Caco-2 (cell line): ENCODE measurements at regions of chr1 and their contacts with region 1.

Region 1: DNA sequence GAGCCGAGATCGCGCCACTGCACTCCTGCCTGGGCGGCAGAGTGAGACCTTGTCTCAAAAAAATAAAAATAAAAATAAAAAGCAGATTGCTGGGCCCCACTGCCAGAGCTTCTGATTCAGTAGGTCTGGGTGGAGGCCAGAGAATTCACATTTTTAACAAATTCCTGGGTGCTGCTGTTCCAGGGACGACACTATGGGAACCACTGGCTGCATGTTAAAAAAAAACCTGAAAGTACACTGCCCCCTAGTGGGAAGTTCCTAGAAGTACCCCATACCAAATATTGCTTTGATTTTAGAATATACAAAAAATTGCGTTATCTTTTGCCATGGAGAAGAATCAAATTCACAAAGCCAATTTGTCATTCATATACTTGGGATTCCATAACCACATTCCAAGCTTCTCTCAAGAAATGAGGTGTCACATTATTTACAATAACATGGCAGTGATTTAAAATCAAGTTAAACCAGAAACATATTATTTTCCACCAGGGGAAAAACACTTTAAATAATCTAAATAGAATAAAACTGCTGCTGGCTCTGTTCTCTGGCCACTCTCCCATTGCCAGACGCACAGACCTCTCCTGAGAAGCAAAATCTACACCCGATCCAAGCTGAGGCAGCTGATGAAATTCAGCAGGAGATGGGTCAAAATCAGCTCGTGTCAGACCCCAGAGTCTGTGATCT is 27.4 kb downstream of the SYF2 start:
- DNase-seq: peak in 1 of 2 experiments; percentile 51
- H3K4me3 ChIP-seq: no peak overlapping the region
- H3K4me3 Mint-ChIP-seq: no peak overlapping the region
- H3K27ac Mint-ChIP-seq: no peak overlapping the region
- H3K4me1 ChIP-seq: no peaks in the 10 kb centered on the region
- H3K4me1 Mint-ChIP-seq: peaks cover 5% of the 10 kb centered on the region
- H3K27me3 ChIP-seq: no peaks in the 10 kb centered on the region
- H3K27me3 Mint-ChIP-seq: no peaks in the 10 kb centered on the region
- CTCF ChIP-seq: peak; percentile 34 to 47

Region 2: GRCh38 chr1:24888971-24889676 is 315.8 kb before region 1 on chr1:
- CTCF ChIA-PET with region 1: no interaction called
- POLR2A ChIA-PET with region 1: no interaction called
- intact Hi-C with region 1: no loop called
- DNase-seq: no peak
- H3K4me3 ChIP-seq: no peak overlapping the region
- H3K4me3 Mint-ChIP-seq: no peak overlapping the region
- H3K27ac Mint-ChIP-seq: no peak overlapping the region
- H3K4me1 ChIP-seq: no peaks in the 10 kb centered on the region
- H3K4me1 Mint-ChIP-seq: no peaks in the 10 kb centered on the region
- H3K27me3 ChIP-seq: no peaks in the 10 kb centered on the region
- H3K27me3 Mint-ChIP-seq: peaks cover 3% of the 10 kb centered on the region
- CTCF ChIP-seq: no peak

Region 3: GRCh38 chr1:25117233-25117823 is 87.6 kb before region 1 on chr1:
- CTCF ChIA-PET with region 1: interaction called, 6 read pairs
- POLR2A ChIA-PET with region 1: no interaction called
- intact Hi-C with region 1: loop called (anchors 1 kb)
- DNase-seq: peak; percentile 45 to 56
- H3K4me3 ChIP-seq: no peak overlapping the region
- H3K4me3 Mint-ChIP-seq: no peak overlapping the region
- H3K27ac Mint-ChIP-seq: no peak overlapping the region
- H3K4me1 ChIP-seq: no peaks in the 10 kb centered on the region
- H3K4me1 Mint-ChIP-seq: peaks cover 4% of the 10 kb centered on the region
- H3K27me3 ChIP-seq: no peaks in the 10 kb centered on the region
- H3K27me3 Mint-ChIP-seq: no peaks in the 10 kb centered on the region
- CTCF ChIP-seq: peak; percentile 33 to 43

Region 4: DNA sequence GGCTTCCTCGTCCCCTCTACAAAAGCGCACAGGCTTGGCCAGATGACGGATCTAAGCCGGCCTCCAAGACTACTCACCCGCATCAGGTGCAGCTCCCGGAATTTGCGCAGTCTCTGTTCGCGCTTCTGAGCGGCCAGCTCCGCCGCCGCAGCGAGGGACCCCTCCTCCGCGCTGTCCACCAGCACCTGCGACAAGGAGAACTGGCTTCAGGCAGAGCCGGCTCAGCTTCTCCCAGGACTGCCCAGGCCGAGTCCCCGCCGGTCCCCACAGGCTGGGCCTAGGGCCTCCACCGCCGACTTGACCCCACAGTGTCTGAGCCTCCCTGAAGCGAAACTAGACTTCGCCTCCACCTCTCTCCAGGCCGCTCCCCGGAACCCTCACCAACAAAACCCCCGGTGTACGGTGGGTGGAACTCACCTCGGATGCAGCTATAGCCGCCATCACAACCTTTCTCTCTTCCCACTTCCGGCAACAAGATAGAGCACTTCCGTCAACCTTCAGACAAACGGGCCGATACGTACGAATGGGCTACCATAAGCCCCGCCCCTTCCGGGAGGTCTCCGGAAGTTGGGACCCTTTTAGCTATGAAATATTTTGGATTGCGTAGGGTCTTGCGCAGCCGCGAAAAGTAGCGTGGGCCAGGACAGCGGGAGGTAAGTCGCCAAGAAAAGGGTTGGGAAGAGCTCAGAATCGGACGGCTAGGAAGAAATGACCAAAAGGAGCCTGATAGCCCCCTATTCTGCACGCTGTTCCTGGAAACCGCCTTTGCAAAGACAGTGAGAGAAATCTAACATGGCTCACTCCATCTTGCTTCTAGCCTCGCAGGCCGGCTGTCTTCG is 27.3 kb after region 1 on chr1 and contains the start of gene SYF2:
- CTCF ChIA-PET with region 1: no interaction called
- POLR2A ChIA-PET with region 1: no interaction called
- intact Hi-C with region 1: no loop called
- DNase-seq: peak; percentile 86 to 88
- H3K4me3 ChIP-seq: peak within 1 kb of the TSS; percentile 59
- H3K4me3 Mint-ChIP-seq: no peak within 1 kb of the TSS
- H3K27ac Mint-ChIP-seq: no peak within 1 kb of the TSS
- H3K4me1 ChIP-seq: 0 out of 2 replicates have a peak, but pooled peaks cover 2% of the 10 kb centered on the region
- H3K4me1 Mint-ChIP-seq: peaks cover 7% of the 10 kb centered on the region
- H3K27me3 ChIP-seq: no peaks in the 10 kb centered on the region
- H3K27me3 Mint-ChIP-seq: no peaks in the 10 kb centered on the region
- CTCF ChIP-seq: no peak
- total RNA-seq, gene SYF2: 31.5 and 32.3 TPM in 2 replicates